B cell (primary cell): ENCODE measurements at regions of chr1 and their contacts with region 1.

Region 1: GRCh38 chr1:26279456-26280332 is at the start of gene SH3BGRL3:
- DNase-seq: peak; percentile 87
- ATAC-seq: peak; percentile 68
- H3K4me3 ChIP-seq: peak within 1 kb of the TSS; percentile 75 to 93 (median 90)
- H3K4me3 Mint-ChIP-seq: peak within 1 kb of the TSS; percentile 92
- H3K27ac ChIP-seq: peak within 1 kb of the TSS; percentile 73 to 81
- H3K27ac Mint-ChIP-seq: peak within 1 kb of the TSS; percentile 91
- H3K4me1 ChIP-seq: peaks cover 55 to 83% of the 10 kb centered on the region in 2 donors
- H3K4me1 Mint-ChIP-seq: peaks cover 74% of the 10 kb centered on the region
- H3K27me3 ChIP-seq: no peaks in the 10 kb centered on the region
- H3K27me3 Mint-ChIP-seq: no peaks in the 10 kb centered on the region
- CTCF ChIP-seq: no peak
- total RNA-seq, gene SH3BGRL3: 230 and 232 TPM in 2 replicates

Region 2: DNA sequence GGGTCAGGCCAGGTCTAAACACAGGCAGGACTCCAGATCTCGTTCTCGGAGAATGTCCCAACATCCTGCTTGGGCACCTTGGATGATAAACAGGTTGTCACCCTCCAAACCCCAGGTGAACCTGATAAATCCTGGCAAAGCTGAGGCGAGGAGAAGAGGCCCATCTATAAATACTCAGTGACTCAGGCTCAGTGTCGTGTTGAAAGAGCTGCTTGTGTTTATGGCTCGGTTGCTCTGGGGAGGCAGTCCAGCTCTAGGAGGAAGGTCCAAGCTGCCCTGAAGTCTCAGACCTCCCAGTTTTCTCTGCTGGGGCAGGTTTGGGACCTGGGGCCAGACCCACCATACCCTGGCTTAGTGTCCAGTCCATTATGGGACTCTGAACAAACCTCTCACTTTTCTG is 196.4 kb before region 1 on chr1:
- CTCF ChIA-PET with region 1: no interaction called
- POLR2A ChIA-PET with region 1: no interaction called
- intact Hi-C with region 1: no loop called
- DNase-seq: no peak
- ATAC-seq: no peak
- H3K4me3 ChIP-seq: no peak overlapping the region
- H3K4me3 Mint-ChIP-seq: no peak overlapping the region
- H3K27ac ChIP-seq: no peak overlapping the region
- H3K27ac Mint-ChIP-seq: no peak overlapping the region
- H3K4me1 ChIP-seq: no peaks in the 10 kb centered on the region
- H3K4me1 Mint-ChIP-seq: no peaks in the 10 kb centered on the region
- H3K27me3 ChIP-seq: peaks cover 0 to 17% (median 2%) of the 10 kb centered on the region in 4 experiments
- H3K27me3 Mint-ChIP-seq: peaks cover 30% of the 10 kb centered on the region
- CTCF ChIP-seq: no peak

Region 3: DNA sequence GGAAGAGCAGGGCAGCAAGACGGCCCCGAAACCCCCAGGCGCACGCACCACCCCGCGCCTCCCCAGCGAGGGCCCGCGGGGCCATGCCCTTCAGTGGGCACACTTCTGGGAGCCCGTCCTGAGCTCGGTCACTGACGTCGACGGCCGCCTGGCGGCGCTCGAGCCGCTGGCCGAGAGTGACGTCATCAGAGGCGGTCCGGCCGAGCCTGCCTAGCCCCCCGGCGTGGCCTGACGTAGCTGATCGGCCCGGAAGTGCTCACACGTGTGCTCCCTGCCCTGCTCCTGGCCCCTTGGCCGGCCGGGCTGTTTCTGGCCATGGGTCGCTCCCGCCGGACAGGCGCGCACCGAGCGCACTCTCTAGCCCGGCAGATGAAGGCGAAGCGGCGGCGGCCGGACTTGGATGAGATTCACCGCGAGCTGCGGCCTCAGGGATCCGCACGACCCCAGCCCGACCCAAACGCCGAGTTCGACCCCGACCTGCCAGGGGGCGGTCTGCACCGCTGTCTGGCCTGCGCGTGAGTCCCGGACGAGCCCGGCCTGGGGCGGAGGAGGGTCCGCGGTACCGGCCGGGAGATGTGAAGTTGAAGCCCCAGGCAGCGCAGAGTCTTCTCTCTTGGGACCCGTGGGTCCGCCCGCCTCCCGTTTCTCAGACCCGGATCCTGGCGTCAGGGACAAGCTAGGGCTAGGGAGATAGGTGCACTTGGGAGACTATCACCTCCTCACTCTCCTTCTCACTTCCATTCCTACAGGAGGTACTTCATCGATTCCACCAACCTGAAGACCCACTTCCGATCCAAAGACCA is 109.8 kb before region 1 on chr1 and contains the start of gene ZNF593:
- CTCF ChIA-PET with region 1: interaction called, 12 read pairs
- POLR2A ChIA-PET with region 1: no interaction called
- intact Hi-C with region 1: no loop called
- DNase-seq: peak; percentile 92
- ATAC-seq: peak; percentile 97
- H3K4me3 ChIP-seq: peak within 1 kb of the TSS; percentile 58 to 94 (median 86)
- H3K4me3 Mint-ChIP-seq: peak within 1 kb of the TSS; percentile 93
- H3K27ac ChIP-seq: peak within 1 kb of the TSS; percentile 38 to 91
- H3K27ac Mint-ChIP-seq: peak within 1 kb of the TSS; percentile 85
- H3K4me1 ChIP-seq: peaks cover 7 to 15% of the 10 kb centered on the region in 2 donors
- H3K4me1 Mint-ChIP-seq: peaks cover 15% of the 10 kb centered on the region
- H3K27me3 ChIP-seq: no peaks in the 10 kb centered on the region
- H3K27me3 Mint-ChIP-seq: no peaks in the 10 kb centered on the region
- CTCF ChIP-seq: peak; percentile 79
- total RNA-seq, gene ZNF593: 10.7 and 13.5 TPM in 2 replicates

Region 4: DNA sequence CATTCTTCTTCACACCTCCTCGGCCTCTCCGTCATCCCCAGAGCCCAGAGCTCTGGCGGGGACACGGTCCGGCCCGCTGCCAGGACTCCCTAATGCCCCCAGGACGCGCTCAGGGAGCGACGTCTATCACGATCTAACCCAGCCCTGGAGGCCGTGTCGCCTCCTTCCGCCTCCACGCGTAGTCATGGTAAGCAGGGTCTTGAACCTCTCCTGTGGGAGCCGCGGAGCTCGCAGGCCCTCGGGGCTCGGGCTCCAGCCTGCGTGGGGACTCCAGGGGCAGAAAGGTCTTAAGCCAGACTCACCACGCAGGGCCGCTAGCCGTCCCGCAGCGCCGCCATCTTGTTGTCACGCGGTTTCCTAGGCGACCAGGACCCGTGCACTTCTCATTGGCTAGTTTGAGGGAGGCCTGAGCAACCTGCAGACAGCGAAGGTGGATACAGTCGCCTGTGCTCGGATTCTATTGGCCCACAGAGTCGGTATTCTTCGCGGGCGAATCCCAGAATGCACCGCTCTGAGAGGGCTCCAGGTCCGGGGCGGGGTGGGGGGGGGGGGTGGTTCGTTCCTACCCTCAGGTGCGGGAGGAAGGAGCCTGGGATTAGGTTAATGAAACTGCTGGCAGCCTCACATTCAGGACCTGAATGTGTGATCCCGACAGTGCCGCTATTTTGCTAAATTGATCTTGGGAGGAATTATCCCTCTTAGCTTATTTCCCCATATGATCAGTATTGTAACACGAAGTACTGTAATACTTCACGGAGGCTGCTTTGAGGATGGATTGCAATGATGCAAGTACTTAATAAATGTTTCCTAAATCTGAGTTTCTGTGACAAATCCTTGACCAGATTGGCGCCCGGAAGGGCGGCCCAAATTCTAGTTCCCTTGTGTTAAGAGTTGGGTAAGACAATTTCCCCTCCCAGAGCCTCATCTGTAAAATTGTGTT is 26.9 kb after region 1 on chr1 and contains the start of gene UBXN11:
- CTCF ChIA-PET with region 1: interaction called, 1,400 read pairs
- POLR2A ChIA-PET with region 1: interaction called, 1,239 read pairs
- intact Hi-C with region 1: no loop called
- DNase-seq: peak; percentile 94
- ATAC-seq: peak; percentile 100
- H3K4me3 ChIP-seq: peak within 1 kb of the TSS; percentile 60 to 99 (median 74)
- H3K4me3 Mint-ChIP-seq: peak within 1 kb of the TSS; percentile 95
- H3K27ac ChIP-seq: peak within 1 kb of the TSS; percentile 52 to 87
- H3K27ac Mint-ChIP-seq: peak within 1 kb of the TSS; percentile 93
- H3K4me1 ChIP-seq: peaks cover 17 to 29% of the 10 kb centered on the region in 2 donors
- H3K4me1 Mint-ChIP-seq: peaks cover 27% of the 10 kb centered on the region
- H3K27me3 ChIP-seq: no peaks in the 10 kb centered on the region
- H3K27me3 Mint-ChIP-seq: no peaks in the 10 kb centered on the region
- CTCF ChIP-seq: no peak
- total RNA-seq, gene UBXN11: 81.4 and 83.8 TPM in 2 replicates

Region 5: DNA sequence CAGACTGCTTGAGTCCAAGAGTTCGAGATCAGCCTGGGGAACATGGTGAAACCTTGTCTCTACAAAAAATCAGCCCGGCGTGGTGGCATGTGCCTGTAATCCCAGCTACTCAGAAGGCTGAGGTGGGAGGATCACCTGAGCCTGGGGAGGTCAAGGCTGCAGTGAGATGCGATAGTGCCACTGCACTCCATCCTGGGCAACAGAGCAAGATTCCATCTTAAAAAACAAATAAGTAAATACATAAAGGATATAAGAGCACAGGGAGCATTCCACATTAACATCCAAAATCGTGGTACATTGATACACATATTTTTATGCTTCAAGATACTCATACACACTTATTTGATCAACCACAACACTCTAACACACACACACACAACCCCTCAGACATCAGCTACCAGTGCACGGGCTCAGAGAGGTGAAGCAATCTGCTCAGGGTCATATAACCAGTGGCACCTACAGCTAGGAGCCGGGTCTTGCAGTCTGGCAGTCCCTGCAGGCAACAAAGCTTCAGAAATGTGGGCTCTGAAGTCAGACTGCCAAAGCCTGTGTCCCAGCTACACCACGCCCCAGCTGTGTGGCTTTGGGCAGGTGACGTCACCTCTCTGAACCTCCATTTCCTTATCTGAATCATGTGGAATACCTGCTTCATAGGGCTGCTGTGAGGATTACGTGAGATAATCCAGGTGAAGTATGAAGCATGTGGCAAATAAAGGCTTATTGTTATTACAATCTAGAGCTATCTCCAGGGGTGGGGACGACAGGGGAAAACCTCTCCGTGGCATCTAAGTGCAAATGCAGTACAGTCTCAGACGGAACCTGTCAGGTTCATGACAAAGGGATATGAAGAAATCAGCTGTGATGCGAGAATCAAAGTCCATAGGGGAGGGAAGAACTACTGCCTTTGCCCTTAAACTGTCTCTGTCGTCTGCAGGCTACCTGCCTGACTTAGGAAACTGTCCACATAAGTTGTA is 79.0 kb after region 1 on chr1:
- CTCF ChIA-PET with region 1: interaction called, 96 read pairs
- POLR2A ChIA-PET with region 1: interaction called, 3 read pairs
- intact Hi-C with region 1: loop called (anchors 1 kb)
- DNase-seq: no peak
- ATAC-seq: no peak
- H3K4me3 ChIP-seq: no peak overlapping the region
- H3K4me3 Mint-ChIP-seq: peak overlapping the region; percentile 29
- H3K27ac ChIP-seq: no peak overlapping the region
- H3K27ac Mint-ChIP-seq: no peak overlapping the region
- H3K4me1 ChIP-seq: peaks cover 22% of the 10 kb centered on the region in 2 donors
- H3K4me1 Mint-ChIP-seq: peaks cover 29% of the 10 kb centered on the region
- H3K27me3 ChIP-seq: peaks cover 0 to 34% (median 10%) of the 10 kb centered on the region in 4 experiments
- H3K27me3 Mint-ChIP-seq: peaks cover 26% of the 10 kb centered on the region
- CTCF ChIP-seq: no peak

Region 6: DNA sequence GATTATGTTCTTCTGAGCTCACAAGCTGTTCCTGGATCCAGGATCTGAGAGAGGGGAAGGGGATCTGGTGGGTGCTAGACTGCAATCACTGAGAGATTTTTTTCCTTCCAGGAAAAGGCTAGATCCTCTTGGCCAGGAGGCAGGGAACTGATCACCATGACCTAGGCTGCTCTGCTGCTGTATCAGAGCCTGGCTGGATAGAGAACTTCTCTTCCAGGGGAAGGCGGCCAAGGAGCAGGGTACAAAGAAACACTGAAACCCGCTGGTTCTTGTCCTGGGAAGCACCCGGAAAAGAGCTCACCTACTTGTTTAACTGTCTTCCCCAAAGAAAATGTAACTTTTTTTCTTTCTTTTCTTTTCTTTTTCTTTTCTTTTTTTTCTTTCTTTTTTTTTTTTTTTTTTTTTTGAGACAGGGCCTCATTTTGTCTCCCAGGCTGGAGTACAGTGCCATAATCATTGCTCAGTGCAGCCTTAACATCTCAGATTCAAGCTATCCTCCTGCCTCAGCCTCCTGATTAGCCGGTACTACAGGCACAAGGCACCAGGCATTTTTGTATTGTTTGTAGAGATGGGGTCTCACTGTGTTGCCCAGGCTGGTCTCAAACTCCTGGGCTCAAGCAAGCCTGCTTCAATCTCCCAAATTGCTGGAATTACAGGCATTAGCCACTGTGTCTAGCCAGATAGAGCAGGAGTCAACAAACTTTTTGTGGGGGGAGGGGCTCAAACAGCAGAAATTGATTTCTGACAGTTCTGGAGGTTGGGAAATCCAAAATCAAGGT is 237.5 kb after region 1 on chr1:
- CTCF ChIA-PET with region 1: no interaction called
- POLR2A ChIA-PET with region 1: no interaction called
- intact Hi-C with region 1: no loop called
- DNase-seq: no peak
- ATAC-seq: no peak
- H3K4me3 ChIP-seq: no peak overlapping the region
- H3K4me3 Mint-ChIP-seq: no peak overlapping the region
- H3K27ac ChIP-seq: no peak overlapping the region
- H3K27ac Mint-ChIP-seq: no peak overlapping the region
- H3K4me1 ChIP-seq: no peaks in the 10 kb centered on the region
- H3K4me1 Mint-ChIP-seq: no peaks in the 10 kb centered on the region
- H3K27me3 ChIP-seq: no peaks in the 10 kb centered on the region
- H3K27me3 Mint-ChIP-seq: peaks cover 6% of the 10 kb centered on the region
- CTCF ChIP-seq: no peak